Cardiac septum (tissue), 1 donor: ENCODE measurements at regions of chr5 and their contacts with region 1.

Region 1: DNA sequence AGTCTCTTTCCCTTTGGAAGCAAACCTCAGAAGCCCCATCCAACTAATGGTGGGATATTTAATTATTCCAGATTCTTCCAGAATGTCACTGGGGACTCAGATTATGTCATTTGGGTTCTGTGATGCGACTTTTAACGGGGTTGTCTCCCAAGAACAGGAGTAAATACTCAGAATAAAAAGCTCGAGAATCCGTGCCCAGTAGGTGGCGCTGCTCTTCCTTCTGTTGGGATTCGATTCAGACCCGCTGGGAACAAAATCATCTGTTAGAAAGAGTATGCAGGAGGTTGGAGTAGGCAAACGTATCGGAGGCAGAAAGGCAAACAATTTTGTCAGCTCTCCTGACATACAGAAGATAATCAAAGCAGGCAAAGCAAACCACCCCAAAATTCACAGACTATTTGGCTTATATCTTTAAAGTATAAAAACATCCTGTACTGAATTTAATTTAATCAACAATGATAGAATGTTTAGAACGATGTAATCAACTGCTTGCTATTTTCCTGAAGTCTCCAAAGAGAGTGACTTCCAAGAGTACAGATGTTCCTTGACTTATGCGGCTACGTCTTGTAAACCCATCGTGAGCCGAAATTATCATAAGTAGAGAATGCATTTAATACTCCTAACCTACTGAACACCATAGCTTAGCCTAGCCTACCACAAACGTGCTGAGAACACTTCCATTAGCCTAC is 169.8 kb upstream of the RAI14 start:
- DNase-seq: peak; percentile 83

Region 2: GRCh38 chr5:34522599-34523386 is 36.5 kb after region 1 on chr5:
- intact Hi-C with region 1: loop called (anchors 2 kb)
- DNase-seq: no peak

Region 3: GRCh38 chr5:34898258-34898895 is 412.1 kb after region 1 on chr5:
- intact Hi-C with region 1: loop called (anchors 1 kb)
- DNase-seq: no peak

Region 4: GRCh38 chr5:35003018-35003957 is 517.0 kb after region 1 on chr5:
- intact Hi-C with region 1: loop called (anchors 5 kb)
- DNase-seq: no peak